ENCODE measurements at regions of chr16 and their contacts with region 1.

Region 1: DNA sequence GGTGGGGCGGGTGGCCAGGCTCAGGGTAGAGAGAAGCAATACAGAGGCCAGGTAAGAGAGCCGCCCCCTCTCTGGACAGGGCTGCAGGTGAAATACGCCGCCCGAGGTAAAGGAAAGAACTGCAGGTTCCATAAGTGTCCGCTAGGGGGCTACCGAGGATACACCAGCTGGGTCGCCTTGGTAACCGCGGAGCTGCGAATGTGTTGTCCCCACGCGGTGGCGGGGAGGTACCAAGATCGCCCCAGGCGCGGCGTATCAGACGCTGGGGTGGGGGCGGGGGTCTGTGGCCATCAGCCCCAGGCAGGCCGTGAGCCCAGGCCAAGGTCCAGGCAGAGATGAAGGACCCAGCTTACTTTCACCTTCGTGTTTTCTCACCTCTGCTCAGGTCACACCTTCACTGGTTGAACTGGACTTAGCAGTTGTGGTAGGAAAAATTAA is 18.4 kb upstream of the ZFP90 start:
- DNase-seq: peak; percentile 94
- H3K4me3 ChIP-seq: peak overlapping the region; percentile 30 to 56
- H3K27ac ChIP-seq: no peak overlapping the region
- H3K4me1 ChIP-seq: peaks cover 0 to 4% of the 10 kb centered on the region in 2 experiments; a peak in 1 of 4 replicates
- H3K27me3 ChIP-seq: no peaks in the 10 kb centered on the region
- CTCF ChIP-seq: peak; percentile 89
- EP300 ChIP-seq: 0 out of 4 replicates have a peak, but pooled peaks of 1 of the 2 experiments have one; percentile 11
- RAD21 ChIP-seq: peak; percentile 66

Region 2: DNA sequence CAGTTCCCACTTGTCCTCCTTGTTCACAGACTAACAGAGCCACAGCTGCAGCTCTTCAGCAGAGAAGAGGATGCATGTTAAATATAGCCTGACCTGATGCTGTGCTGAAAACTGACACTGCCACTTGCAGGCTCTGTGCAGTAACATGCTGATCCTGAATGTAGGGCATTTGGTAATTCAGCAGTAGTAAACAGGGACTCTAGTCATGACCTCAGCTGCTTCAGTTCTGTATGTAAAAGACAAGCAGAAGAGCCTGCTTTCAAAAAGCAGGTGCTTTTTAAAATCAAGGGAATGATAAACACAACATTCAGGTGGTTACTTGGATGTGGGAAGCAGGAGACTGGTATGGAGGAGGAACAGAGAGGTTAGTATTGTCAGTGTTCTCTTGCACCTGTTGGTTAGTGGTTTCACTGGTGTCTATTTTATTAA is 318.6 kb before region 1 on chr16:
- CTCF ChIA-PET with region 1: no interaction called
- POLR2A ChIA-PET with region 1: no interaction called
- DNase-seq: no peak
- H3K4me3 ChIP-seq: no peak overlapping the region
- H3K27ac ChIP-seq: no peak overlapping the region
- H3K4me1 ChIP-seq: peaks cover 0 to 6% of the 10 kb centered on the region in 2 experiments; a peak in 3 of 4 replicates
- H3K27me3 ChIP-seq: no peaks in the 10 kb centered on the region
- CTCF ChIP-seq: no peak
- EP300 ChIP-seq: no peak
- RAD21 ChIP-seq: peak; percentile 28

Region 3: DNA sequence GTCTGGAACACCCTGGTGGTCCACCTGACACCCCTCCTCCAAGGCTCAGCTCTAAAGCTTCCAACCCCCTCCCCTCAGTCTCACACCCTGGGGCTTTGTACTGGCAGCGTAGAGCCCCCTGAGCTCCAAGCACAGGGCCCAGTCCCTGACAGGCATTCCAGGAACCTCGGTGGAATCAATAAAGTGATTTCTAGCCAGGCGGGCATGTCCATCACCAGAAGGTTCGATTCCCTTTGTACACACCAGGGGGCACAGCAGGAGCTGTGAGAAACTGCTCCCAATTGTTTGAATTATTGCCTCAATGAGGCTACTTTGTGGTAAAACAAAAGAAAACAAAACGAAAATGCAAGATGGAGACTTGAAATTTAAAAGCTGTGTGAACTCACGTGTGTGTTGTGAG is 124.2 kb before region 1 on chr16:
- CTCF ChIA-PET with region 1: interaction called, 16 read pairs
- POLR2A ChIA-PET with region 1: no interaction called
- DNase-seq: peak; percentile 49
- H3K4me3 ChIP-seq: no peak overlapping the region
- H3K27ac ChIP-seq: no peak overlapping the region
- H3K4me1 ChIP-seq: peaks cover 0 to 16% of the 10 kb centered on the region in 2 experiments; a peak in 1 of 4 replicates
- H3K27me3 ChIP-seq: no peaks in the 10 kb centered on the region; the same call in 1 of the 2 replicates
- CTCF ChIP-seq: peak; percentile 51
- EP300 ChIP-seq: no peak
- RAD21 ChIP-seq: peak; percentile 69

Region 4: DNA sequence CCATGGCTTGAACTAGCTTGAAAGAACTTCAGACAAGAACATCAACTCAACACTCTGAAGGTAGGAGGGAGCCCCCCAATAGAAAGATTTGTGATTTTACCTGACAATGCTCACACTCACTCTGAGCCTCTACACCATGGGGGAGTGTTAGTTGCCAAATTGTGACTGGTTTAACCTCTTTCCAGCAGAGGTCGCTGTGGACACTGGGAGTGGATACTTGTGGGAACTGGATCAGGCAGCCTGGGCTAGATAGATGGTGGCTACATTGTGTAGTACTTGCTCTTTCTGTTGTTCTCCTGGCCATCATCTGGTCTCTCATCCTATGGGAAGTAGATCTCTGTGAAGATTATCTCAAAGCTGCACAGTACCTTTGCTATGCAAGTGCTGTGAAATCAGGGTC is 75.2 kb before region 1 on chr16:
- CTCF ChIA-PET with region 1: interaction called, 14 read pairs
- POLR2A ChIA-PET with region 1: no interaction called
- DNase-seq: peak; percentile 63
- H3K4me3 ChIP-seq: no peak overlapping the region
- H3K27ac ChIP-seq: no peak overlapping the region
- H3K4me1 ChIP-seq: peaks cover under 1 to 21% of the 10 kb centered on the region in 2 experiments; a peak in 1 of 4 replicates
- H3K27me3 ChIP-seq: no peaks in the 10 kb centered on the region
- CTCF ChIP-seq: peak; percentile 49
- EP300 ChIP-seq: no peak
- RAD21 ChIP-seq: peak; percentile 68

Region 5: DNA sequence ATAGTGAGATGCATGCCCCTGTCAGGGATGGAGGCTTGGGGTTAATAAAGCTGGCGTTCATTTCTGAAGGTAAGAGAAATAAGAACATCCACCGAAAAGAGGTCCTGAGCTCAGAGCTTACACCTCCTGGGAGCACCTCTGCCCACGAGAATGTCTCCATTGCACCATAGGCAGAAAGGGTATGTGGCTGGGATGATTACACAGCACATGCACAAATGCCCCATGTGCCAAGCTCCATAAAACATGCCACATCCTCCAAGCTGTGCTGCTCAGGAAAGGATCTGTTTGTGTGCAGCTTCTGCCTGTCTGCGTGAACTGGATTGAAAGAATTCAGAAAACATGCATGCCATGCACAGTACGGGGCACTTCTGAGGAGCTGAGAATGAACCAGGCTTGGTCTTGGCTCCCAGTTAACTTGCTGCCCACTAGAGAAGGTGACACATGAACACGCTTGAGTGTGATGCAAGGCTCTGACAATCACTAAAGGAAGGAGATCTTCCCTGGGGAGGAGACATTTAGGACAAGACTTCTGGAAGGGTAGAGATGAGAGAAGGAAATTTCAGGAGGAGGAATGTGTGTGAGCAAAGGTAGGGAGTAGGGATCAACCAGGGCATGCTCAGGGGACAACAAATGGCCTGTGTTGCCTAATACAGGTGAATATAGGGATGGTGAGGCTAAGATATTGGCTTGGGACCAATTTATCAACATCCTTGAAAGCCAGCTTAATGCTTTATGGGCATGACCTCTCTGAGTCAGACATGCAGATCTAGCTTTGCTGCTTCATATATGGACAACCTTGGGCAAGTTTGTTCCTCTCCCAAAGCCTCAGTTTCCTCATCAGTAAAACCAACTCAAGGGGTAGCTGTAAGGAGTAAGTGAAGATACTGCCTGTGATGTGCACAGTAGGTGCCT is 40.3 kb before region 1 on chr16:
- CTCF ChIA-PET with region 1: interaction called, 12 read pairs
- POLR2A ChIA-PET with region 1: no interaction called
- DNase-seq: no peak
- H3K4me3 ChIP-seq: no peak overlapping the region
- H3K27ac ChIP-seq: no peak overlapping the region
- H3K4me1 ChIP-seq: no peaks in the 10 kb centered on the region
- H3K27me3 ChIP-seq: no peaks in the 10 kb centered on the region
- CTCF ChIP-seq: no peak
- EP300 ChIP-seq: no peak
- RAD21 ChIP-seq: no peak

Region 6: GRCh38 chr16:68506331-68507053 is 14.2 kb before region 1 on chr16:
- CTCF ChIA-PET with region 1: interaction called, 31 read pairs
- POLR2A ChIA-PET with region 1: no interaction called
- DNase-seq: no peak
- H3K4me3 ChIP-seq: no peak overlapping the region
- H3K27ac ChIP-seq: no peak overlapping the region
- H3K4me1 ChIP-seq: no peaks in the 10 kb centered on the region
- H3K27me3 ChIP-seq: peaks cover 6% of the 10 kb centered on the region; the same call in 1 of the 2 replicates
- CTCF ChIP-seq: no peak
- EP300 ChIP-seq: no peak
- RAD21 ChIP-seq: no peak

Region 7: GRCh38 chr16:69123910-69124309 is 603.2 kb after region 1 on chr16:
- CTCF ChIA-PET with region 1: interaction called, 10 read pairs
- POLR2A ChIA-PET with region 1: no interaction called
- DNase-seq: peak; percentile 65
- H3K4me3 ChIP-seq: no peak overlapping the region
- H3K27ac ChIP-seq: no peak overlapping the region
- H3K4me1 ChIP-seq: no peaks in the 10 kb centered on the region
- H3K27me3 ChIP-seq: no peaks in the 10 kb centered on the region
- CTCF ChIP-seq: peak; percentile 82
- EP300 ChIP-seq: no peak
- RAD21 ChIP-seq: peak; percentile 89